Kidney (tissue), 22 donors: ENCODE measurements at regions of chr15 and their contacts with region 1.

Region 1: DNA sequence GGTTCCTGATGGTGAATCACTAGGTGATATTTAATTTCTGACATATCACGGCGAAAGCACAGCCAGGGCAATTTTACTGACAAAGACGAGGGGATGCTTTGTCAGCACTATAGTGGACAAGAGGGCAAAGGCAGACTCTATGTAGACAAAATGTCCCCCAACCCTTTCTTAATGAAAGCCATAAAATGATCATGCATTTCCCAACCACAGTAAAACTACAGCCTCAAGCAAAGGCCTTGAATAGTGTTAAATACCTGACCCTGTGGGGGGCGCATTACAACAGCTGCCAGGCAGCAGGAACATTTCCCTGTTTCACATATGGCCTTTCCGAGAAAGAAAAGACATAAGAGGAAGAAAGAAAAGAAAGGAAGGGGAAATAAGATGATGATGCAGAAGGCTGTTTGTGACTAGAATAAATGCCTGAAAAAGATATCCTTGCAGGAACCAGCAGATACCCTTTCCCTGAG is 49.5 kb downstream of the GLDN start:
- DNase-seq: peak in 3 of 5 donors; percentile 4 to 50 (median 19)
- H3K4me3 ChIP-seq: no peak overlapping the region
- H3K27ac ChIP-seq: no peak overlapping the region
- H3K4me1 ChIP-seq: no peaks in the 10 kb centered on the region
- H3K27me3 ChIP-seq: no peaks in the 10 kb centered on the region
- CTCF ChIP-seq: no peak

Region 2: GRCh38 chr15:51162865-51163762 is 227.9 kb before region 1 on chr15:
- intact Hi-C with region 1: loop called (anchors 10 kb)
- DNase-seq: peak; percentile 62 to 73 (median 65)
- H3K4me3 ChIP-seq: no peak overlapping the region
- H3K27ac ChIP-seq: no peak overlapping the region
- H3K4me1 ChIP-seq: no peaks in the 10 kb centered on the region
- H3K27me3 ChIP-seq: no peaks in the 10 kb centered on the region
- CTCF ChIP-seq: peak; percentile 88

Region 3: GRCh38 chr15:51312166-51313097 is 78.6 kb before region 1 on chr15:
- intact Hi-C with region 1: no loop called
- DNase-seq: no peak
- H3K4me3 ChIP-seq: no peak overlapping the region
- H3K27ac ChIP-seq: no peak overlapping the region
- H3K4me1 ChIP-seq: no peaks in the 10 kb centered on the region
- H3K27me3 ChIP-seq: no peaks in the 10 kb centered on the region
- CTCF ChIP-seq: no peak